Esophagus muscularis mucosa (tissue), 4 donors: ENCODE measurements at regions of chr15 and their contacts with region 1.

Region 1: GRCh38 chr15:25933456-25934158 is 70.5 kb upstream of the ATP10A start:
- DNase-seq: peak; percentile 93
- H3K4me3 ChIP-seq: peak overlapping the region; percentile 35 to 42 (median 37)
- H3K27ac ChIP-seq: peak overlapping the region; percentile 67 to 77 (median 74)
- H3K4me1 ChIP-seq: peaks cover 0 to 23% (median 19%) of the 10 kb centered on the region in 4 donors
- H3K27me3 ChIP-seq: no peaks in the 10 kb centered on the region
- CTCF ChIP-seq: peak; percentile 66 to 76 (median 72)
- EP300 ChIP-seq: no peak
- POLR2A ChIP-seq: no peak

Region 2: DNA sequence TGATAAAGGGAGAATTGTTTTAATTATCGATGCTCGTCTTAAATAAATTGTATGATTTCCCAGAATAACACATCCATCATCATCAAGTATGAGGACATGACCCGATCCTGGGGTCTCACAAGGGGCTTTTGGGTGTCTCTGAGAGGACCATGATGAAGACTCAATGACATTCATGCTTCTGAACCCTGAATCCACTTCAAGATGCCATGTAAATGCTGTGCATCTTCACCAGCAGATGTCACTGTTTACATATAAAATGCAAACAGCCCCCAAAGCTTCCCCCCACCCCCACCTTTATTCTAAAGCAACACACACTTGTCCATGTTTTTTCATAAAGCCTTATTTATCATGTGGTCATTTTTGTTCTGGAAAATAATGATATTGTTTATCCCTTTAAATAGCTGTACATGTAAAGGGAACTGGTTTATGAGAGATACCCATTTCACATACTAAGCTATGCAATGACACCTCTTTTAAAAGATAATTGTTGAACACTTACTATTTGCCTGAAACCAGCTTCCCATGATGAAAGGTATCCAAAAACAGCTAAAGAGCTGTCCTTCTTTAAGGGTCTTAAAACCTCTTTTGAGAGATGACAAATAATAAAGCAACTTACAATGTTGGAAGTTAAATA is 425.1 kb before region 1 on chr15:
- intact Hi-C with region 1: loop called (anchors 5 kb)
- DNase-seq: no peak
- H3K4me3 ChIP-seq: no peak overlapping the region
- H3K27ac ChIP-seq: no peak overlapping the region
- H3K4me1 ChIP-seq: peaks cover 0 to 27% (median 3%) of the 10 kb centered on the region in 4 donors
- H3K27me3 ChIP-seq: no peaks in the 10 kb centered on the region
- CTCF ChIP-seq: peak; percentile 73 to 80 (median 75)
- EP300 ChIP-seq: no peak
- POLR2A ChIP-seq: no peak

Region 3: GRCh38 chr15:25624504-25625177 is 309.0 kb before region 1 on chr15:
- intact Hi-C with region 1: no loop called
- DNase-seq: no peak
- H3K4me3 ChIP-seq: no peak overlapping the region
- H3K27ac ChIP-seq: no peak overlapping the region
- H3K4me1 ChIP-seq: no peaks in the 10 kb centered on the region
- H3K27me3 ChIP-seq: no peaks in the 10 kb centered on the region
- CTCF ChIP-seq: no peak
- EP300 ChIP-seq: no peak
- POLR2A ChIP-seq: no peak

Region 4: DNA sequence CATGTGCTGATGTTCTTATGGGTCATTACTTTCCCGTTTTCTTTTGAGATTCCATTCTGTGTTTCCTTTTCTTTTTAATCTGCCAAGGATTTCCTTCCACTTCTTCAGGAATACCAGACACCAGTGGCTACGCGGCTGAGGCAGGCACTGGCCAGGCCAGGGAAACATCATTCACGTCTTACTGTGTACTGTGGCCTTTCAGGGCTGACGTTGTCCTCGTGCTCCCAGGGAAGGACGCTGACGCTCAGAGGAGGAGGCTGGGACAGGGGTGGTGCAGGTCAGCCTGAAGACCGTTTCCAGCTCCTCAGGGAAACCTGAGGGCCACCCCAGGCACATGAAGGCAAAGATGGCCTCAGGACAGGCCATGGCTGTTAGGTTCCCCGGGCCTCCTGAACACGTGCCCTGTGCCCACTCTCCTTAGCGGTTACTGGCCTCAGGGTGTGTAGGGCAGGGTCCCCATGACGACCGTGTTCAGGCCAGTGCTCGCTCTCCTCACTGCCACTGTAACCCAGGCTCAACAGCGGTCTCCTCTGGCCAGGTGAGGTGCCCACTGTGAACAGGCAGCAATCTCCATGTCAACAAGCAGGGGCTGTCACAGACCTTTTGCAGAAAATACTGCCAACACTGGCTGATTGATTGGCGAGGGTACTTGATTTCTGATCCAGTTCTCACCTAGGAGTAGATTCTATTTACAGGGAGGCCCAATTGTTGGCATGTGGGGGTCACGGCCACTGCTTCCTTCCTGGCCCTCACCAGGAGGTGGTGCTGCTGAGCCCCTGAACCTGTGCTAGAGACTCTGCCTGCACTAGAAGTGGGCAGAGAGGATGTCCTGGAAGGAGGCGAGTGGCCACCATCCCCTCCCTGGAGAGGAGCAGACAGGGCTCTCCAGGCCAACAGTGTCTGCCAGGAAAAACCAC is 240.0 kb before region 1 on chr15:
- intact Hi-C with region 1: loop called (anchors 2 kb)
- DNase-seq: no peak
- H3K4me3 ChIP-seq: no peak overlapping the region
- H3K27ac ChIP-seq: peak overlapping the region in 1 of 4 donors; percentile 34
- H3K4me1 ChIP-seq: peaks cover 0 to 37% (median 19%) of the 10 kb centered on the region in 4 donors
- H3K27me3 ChIP-seq: no peaks in the 10 kb centered on the region
- CTCF ChIP-seq: peak; percentile 64 to 74 (median 72)
- EP300 ChIP-seq: no peak
- POLR2A ChIP-seq: no peak

Region 5: DNA sequence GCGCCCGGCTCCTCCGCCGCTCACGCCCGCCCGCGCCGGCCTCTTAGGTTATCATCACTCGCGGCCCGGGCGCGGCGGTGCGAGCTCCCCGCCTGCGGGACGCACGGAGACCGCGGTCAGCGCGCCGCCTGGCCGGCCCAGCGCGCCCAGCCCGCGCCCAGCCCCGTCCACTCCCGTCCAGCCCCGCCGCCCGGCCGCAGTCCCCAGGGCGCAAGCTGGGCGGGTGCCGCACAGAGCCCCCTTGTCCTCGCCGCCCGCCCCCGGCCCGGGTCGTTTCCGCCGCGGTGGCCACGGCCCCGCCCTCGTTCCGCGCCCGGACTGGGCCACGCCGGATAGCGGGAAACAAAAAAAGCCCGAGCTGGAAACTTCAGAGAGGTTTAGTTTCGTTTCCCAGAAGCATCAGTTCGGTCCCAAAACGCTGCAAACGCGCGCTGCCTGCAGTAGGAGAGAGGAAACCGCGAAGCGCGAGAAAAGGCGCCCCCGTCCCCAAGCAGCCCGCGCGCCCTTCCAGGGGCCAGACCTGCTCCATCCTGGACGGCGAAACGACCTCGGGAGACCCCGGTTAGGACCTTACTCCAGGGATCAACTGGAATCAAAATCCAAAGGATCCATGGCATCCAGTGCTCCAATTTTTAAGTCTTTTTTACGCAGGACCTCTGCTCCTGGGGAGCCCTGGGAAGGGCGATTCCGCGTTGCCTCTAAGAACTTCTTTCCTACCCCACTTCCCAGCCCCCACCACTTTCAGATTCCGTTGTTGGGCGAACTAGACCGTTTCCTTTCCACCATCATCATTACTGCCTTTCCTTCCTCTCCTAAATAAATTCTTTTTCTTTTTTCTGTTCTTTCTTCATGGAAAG is 70.3 kb before region 1 on chr15 and contains the start of gene ATP10A:
- intact Hi-C with region 1: loop called (anchors 5 kb)
- DNase-seq: no peak
- H3K4me3 ChIP-seq: peak within 1 kb of the TSS; percentile 73 to 91 (median 78)
- H3K27ac ChIP-seq: peak within 1 kb of the TSS; percentile 91 to 97 (median 94)
- H3K4me1 ChIP-seq: peaks cover 9 to 60% (median 46%) of the 10 kb centered on the region in 4 donors
- H3K27me3 ChIP-seq: no peaks in the 10 kb centered on the region
- CTCF ChIP-seq: no peak
- EP300 ChIP-seq: peak; percentile 35
- POLR2A ChIP-seq: no peak
- total RNA-seq, gene ATP10A: 23.9 to 51.9 (median 32.6) TPM

Region 6: DNA sequence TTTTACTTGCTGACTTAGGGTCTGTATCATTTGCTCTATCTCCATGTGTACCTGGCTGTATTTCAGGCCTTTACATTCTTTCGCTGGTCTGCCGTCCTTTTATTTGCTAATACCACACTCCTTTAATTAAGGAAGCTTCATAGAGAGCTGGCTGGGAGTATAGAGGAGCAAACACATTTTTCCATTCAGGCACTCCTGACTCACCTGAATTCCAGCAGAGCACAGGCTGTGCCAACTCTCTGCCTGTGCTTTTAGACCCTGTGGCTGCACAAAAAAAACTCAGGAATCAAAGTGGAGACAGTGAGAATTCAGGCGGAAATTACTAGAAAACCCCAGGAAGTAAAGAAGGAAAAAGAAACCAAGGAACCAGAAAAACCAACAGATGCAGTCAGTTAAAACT is 41.5 kb before region 1 on chr15:
- intact Hi-C with region 1: no loop called
- DNase-seq: no peak
- H3K4me3 ChIP-seq: no peak overlapping the region
- H3K27ac ChIP-seq: peak overlapping the region; percentile 68 to 74 (median 72)
- H3K4me1 ChIP-seq: peaks cover 2 to 34% (median 31%) of the 10 kb centered on the region in 4 donors
- H3K27me3 ChIP-seq: no peaks in the 10 kb centered on the region
- CTCF ChIP-seq: no peak
- EP300 ChIP-seq: no peak
- POLR2A ChIP-seq: no peak

Region 7: DNA sequence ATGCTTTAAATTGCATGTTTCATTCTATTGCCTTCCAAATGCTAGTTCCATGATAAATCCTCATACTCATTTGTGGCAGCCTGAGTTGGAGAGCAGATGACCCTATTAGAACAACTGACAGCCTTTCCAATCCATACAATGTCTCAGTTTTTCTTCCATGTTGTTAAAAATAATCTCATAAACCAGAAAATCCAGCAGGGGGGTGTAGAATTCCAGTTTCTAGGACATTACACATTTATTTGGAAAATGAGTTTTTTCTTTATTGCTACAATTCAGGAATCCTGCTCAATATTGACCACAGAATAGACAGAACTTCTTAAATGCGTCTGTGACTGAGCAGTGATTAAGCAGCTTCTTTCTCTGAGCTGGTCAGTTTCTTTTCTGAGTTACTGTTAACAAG is 103.8 kb after region 1 on chr15:
- intact Hi-C with region 1: no loop called
- DNase-seq: no peak
- H3K4me3 ChIP-seq: no peak overlapping the region
- H3K27ac ChIP-seq: no peak overlapping the region
- H3K4me1 ChIP-seq: no peaks in the 10 kb centered on the region
- H3K27me3 ChIP-seq: no peaks in the 10 kb centered on the region
- CTCF ChIP-seq: peak in 1 of 3 experiments; percentile 9
- EP300 ChIP-seq: no peak
- POLR2A ChIP-seq: no peak